Activated CD4-positive, alpha-beta memory T cell treated with anti-CD3 and anti-CD28 coated beads for 36 hours (primary cell): ENCODE measurements at regions of chr12 and their contacts with region 1.

Region 1: DNA sequence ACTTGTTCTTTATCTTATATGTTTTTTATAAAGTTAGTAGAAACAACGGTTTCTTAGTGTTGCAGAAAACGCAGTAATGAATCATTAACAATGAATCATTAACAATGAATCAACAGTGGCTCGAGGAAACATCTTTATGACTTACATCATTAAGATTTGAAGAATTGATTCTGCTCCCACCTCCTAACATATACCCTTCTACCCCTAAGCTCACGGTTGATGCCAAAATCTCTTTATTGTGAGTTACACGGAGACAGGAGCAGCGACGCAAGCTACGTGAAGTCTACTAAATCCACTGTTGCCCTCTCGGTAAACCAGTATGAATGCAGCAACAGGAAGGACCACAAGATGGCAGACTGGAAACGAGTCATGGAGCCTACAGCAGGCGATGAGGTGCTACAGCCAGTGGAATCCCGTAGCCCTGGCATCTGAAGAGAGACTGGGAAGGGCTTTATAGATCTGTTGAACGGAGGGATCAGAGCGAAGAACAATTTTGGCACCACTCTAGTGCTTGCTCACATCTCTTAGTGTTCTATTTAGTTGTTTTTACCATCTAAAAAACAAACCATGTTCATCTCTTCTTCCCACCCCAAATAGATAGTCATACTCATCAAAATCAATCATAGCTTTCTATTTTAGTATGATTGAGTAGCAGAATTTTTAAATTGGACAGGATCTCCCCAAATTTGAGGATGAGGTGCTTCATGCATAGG is 332.7 kb downstream of the DUSP6 start:
- DNase-seq: peak; percentile 79
- H3K4me3 Mint-ChIP-seq: no peak overlapping the region
- H3K27ac Mint-ChIP-seq: no peak overlapping the region
- H3K4me1 Mint-ChIP-seq: peaks cover 8% of the 10 kb centered on the region
- H3K27me3 Mint-ChIP-seq: peaks cover 5% of the 10 kb centered on the region

Region 2: DNA sequence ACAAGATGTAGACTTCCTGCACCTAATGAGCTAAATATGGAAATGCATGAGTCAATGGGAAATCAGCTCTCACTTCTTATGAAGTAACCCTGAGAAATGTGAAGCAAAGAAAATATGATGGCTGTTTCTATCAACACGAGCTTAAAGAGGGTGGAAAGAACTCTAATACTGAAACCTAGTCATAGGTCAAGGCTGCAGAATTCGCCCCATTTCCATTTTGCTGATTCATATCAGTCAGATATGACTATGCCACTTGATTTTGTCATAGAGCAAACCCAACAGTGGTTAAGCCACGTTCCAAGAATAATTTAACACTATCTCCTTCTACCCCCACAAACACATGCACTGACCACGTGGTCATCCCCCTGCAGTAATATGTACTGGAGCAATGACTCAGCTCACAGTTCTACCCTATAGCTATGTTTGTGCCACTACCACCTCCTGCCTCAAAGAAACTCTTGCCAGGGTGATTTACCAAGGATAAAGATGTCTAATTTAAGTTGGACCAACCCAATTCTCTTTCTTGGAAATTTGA is 719.9 kb before region 1 on chr12:
- CTCF ChIA-PET with region 1: no interaction called
- POLR2A ChIA-PET with region 1: no interaction called
- intact Hi-C with region 1: loop called (anchors 2 kb)
- DNase-seq: peak; percentile 75
- H3K4me3 Mint-ChIP-seq: no peak overlapping the region
- H3K27ac Mint-ChIP-seq: peak overlapping the region; percentile 72
- H3K4me1 Mint-ChIP-seq: peaks cover 27% of the 10 kb centered on the region
- H3K27me3 Mint-ChIP-seq: no peaks in the 10 kb centered on the region

Region 3: DNA sequence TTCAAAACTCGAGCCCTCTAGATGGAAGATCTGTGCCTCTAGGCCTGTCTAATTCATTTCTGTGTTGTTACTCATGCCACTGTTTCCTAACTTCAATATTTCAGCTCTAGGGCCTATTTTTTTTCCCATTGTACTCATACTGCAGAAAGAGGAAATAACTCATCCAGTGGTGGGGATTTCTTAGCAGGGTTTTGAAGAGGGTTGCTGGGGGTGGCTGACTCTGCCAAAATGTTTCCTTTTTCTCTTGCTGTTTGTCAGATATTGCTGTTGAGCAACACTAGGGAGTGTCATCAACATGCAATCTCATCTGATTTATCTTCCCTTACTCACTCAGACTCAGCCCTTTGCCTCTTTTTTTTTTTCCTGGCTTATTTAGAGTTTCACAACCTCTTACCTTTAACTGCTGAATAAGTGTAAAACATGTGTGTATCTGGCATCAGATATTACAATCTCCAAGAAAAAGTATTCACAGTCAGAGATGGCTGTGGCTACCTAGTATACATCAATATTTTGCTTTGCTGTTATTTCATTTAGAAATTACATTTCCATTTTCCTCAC is 143.2 kb after region 1 on chr12:
- CTCF ChIA-PET with region 1: no interaction called
- POLR2A ChIA-PET with region 1: no interaction called
- intact Hi-C with region 1: loop called (anchors 1 kb)
- DNase-seq: peak; percentile 90
- H3K4me3 Mint-ChIP-seq: no peak overlapping the region
- H3K27ac Mint-ChIP-seq: no peak overlapping the region
- H3K4me1 Mint-ChIP-seq: peaks cover 13% of the 10 kb centered on the region
- H3K27me3 Mint-ChIP-seq: no peaks in the 10 kb centered on the region

Region 4: DNA sequence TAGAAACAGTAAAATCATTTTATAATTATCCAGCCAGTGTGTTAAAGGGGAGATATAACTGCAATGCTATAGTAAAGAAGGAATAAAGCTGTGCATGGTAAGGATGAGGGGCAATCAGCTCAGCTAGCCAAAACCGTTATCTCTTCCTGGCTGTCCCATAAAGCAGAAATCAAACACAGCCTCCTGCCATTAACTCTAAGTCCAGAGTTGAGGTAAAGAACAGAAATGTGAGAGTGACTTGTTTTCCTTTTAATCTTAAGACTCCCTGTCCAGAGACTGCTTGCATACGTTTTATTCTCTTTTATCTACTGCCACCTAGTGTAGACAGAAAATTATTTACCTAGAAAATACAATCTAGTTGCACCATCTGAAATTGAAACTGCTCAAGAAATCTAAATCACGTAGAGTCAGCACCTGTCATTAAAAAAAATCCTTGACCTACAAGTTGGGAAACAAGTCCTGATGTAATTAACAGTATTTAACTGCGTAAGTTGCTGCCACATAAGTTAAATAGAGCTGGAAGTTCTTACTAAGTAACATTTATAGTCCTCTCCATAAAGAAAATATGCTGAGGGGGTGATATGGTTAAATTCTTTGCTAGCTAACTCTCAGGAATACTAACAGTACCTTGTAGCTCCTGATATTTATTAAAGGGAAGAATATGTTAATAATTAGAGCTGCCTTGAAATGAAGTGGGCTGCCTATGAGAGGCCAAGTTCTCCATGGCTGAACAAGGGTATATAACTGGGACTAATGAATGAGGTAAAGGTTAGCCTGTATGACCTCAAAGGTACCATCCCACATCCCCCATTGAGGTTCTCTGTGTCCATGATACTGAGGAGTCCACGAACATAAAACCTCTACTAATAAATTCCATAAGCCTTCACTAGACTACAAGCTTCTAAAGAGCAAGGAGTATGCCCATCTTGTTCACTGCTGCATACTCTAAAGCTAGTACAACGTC is 442.4 kb after region 1 on chr12:
- CTCF ChIA-PET with region 1: interaction called, 29 read pairs
- POLR2A ChIA-PET with region 1: interaction called, 3 read pairs
- intact Hi-C with region 1: loop called (anchors 1 kb)
- DNase-seq: no peak
- H3K4me3 Mint-ChIP-seq: peak overlapping the region; percentile 35
- H3K27ac Mint-ChIP-seq: peak overlapping the region; percentile 60
- H3K4me1 Mint-ChIP-seq: peaks cover 13% of the 10 kb centered on the region
- H3K27me3 Mint-ChIP-seq: no peaks in the 10 kb centered on the region

Region 5: DNA sequence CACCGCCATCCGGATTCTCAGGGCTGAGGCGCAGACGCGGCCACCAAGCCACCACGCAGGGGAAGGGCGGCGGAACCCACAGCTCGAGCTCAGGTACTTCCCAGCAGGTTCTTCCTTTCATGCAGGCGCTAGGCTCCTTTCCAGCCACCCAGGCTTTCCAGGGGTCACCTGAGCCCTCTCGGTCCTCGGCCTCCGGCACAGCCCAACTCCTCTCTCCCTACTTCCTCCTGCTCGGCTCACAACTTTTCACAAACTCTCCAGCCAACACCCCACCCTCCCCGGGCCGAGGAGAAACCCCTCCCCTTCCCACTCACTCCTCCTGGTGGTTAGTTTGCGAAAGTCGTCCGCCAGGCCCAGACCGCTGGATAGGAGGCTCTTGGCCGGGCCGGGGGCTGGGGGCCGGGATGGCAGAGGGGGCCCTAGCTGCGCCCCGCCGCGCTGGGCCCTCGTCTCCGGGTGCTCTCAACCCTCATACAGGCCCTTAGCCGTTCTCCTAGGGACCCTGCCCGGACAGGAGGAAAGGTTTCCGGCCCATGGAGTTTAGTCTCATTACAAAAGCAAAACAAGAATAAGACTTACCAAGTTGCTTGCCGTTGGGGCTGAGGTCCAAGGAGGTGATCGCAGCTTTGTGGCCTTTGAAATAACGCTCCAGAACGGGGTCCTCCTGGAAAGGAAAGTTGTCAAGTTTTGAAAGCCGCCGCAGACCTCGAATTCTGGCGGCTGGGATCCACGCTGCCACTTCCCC is 505.1 kb after region 1 on chr12 and contains the start of gene GALNT4:
- CTCF ChIA-PET with region 1: interaction called, 88 read pairs
- POLR2A ChIA-PET with region 1: interaction called, 4 read pairs
- intact Hi-C with region 1: loop called (anchors 1 kb)
- DNase-seq: peak; percentile 86
- H3K4me3 Mint-ChIP-seq: peak within 1 kb of the TSS; percentile 99
- H3K27ac Mint-ChIP-seq: peak within 1 kb of the TSS; percentile 98
- H3K4me1 Mint-ChIP-seq: peaks cover 45% of the 10 kb centered on the region
- H3K27me3 Mint-ChIP-seq: no peaks in the 10 kb centered on the region
- total RNA-seq, gene GALNT4: 5.8 to 6.0 TPM

Region 6: DNA sequence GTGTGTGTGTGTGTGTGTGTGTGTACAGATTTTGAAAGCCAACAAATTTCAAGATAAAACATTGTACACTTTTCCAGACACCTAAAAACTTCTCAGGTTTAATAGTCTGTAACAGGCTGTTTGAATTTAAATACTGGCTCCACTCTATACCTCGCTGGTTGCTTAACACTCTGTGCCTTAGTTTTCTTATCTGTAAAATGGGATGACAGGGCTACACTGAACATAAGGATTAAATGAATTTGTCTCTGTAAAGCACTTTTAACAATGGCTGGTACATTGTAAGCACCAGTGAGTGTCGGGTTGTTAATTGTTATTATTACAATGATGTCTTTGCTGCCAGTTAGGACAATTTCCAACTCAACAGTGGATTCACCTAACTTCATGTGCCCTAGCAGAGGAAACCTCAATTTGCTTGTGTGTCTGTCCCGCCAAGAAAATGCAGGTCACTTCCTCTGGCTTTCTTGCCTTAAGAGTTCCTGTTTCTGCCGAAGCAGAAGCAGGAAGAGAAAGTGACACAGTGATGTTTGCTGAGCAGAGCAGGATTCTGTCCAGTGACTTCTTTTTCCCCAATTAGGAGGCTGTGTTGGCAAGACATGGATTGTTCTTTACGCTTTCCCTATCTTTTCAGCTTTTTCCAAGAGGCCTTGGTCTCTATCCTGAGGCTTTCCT is 843.1 kb after region 1 on chr12:
- CTCF ChIA-PET with region 1: no interaction called
- POLR2A ChIA-PET with region 1: no interaction called
- intact Hi-C with region 1: loop called (anchors 5 kb)
- DNase-seq: peak; percentile 57
- H3K4me3 Mint-ChIP-seq: peak overlapping the region; percentile 66
- H3K27ac Mint-ChIP-seq: peak overlapping the region; percentile 95
- H3K4me1 Mint-ChIP-seq: peaks cover 67% of the 10 kb centered on the region
- H3K27me3 Mint-ChIP-seq: no peaks in the 10 kb centered on the region

Region 7: DNA sequence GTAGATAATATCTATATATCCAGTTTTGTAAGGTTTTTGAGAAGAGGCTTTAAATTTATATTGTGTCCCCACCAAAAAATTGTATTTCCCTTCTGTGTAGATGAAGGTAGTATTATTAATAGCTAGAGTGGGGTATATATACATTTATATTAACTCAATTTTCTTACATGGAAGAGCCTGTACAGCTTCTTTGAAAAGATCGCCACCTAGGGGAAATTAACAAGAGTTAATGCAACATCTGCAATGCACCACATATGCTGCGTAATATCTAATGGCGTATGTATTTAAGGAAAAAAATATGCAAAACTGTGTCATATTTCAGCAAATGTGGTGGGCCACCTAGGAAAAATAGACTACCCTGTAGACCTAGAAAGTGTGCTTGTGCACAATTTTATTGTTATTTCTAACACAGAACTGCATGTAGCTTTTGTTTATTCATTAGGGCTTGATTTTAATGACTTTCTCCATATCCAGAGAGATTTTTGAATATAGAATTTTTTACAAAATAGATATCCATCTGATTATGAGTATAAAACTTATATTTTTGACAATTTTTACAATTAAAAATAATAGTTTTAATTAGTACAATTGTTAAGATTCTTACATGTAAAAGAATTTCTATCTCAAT is 1921.4 kb after region 1 on chr12:
- CTCF ChIA-PET with region 1: no interaction called
- POLR2A ChIA-PET with region 1: no interaction called
- intact Hi-C with region 1: loop called (anchors 5 kb)
- DNase-seq: no peak
- H3K4me3 Mint-ChIP-seq: no peak overlapping the region
- H3K27ac Mint-ChIP-seq: no peak overlapping the region
- H3K4me1 Mint-ChIP-seq: no peaks in the 10 kb centered on the region
- H3K27me3 Mint-ChIP-seq: peaks cover 6% of the 10 kb centered on the region